ENCODE measurements at regions of chr3 and their contacts with region 1.

Region 1: DNA sequence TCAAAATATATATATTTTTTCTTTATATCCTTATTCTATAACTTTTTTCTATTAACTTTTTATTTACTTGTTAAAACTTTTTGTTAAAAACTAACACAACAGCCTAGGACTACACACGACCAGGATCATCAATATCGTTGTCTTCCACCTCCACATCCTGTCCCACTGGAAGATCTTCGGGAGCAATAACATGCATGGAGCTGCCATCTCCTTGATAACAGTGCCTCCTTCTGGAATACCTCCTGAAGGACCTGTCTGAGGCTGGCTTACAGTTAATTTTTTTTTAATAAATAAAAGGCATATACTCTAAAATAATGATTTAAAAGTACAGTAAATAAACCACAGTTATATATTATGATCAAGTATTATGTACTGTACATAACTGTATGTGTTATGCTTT is 58.9 kb downstream of the SFMBT1 start:
- DNase-seq: no peak
- H3K4me3 ChIP-seq: no peak overlapping the region
- H3K4me3 Mint-ChIP-seq: no peak overlapping the region
- H3K27ac ChIP-seq: no peak overlapping the region
- H3K27ac Mint-ChIP-seq: no peak overlapping the region
- H3K4me1 ChIP-seq: peaks cover 23 to 26% of the 10 kb centered on the region in 2 donors
- H3K4me1 Mint-ChIP-seq: peaks cover 20% of the 10 kb centered on the region
- H3K27me3 ChIP-seq: no peaks in the 10 kb centered on the region
- H3K27me3 Mint-ChIP-seq: peaks cover 0 to 5% (median 2%) of the 10 kb centered on the region in 3 donors
- CTCF ChIP-seq: no peak

Region 2: GRCh38 chr3:53005854-53006513 is 19.0 kb after region 1 on chr3:
- intact Hi-C with region 1: loop called in 1 of 2 experiments (anchors 1 kb)
- DNase-seq: no peak
- H3K4me3 ChIP-seq: no peak overlapping the region
- H3K4me3 Mint-ChIP-seq: no peak overlapping the region
- H3K27ac ChIP-seq: no peak overlapping the region
- H3K27ac Mint-ChIP-seq: no peak overlapping the region
- H3K4me1 ChIP-seq: no peaks in the 10 kb centered on the region
- H3K4me1 Mint-ChIP-seq: peaks cover 9% of the 10 kb centered on the region
- H3K27me3 ChIP-seq: no peaks in the 10 kb centered on the region
- H3K27me3 Mint-ChIP-seq: peaks cover 2 to 9% (median 8%) of the 10 kb centered on the region in 3 donors
- CTCF ChIP-seq: no peak

Region 3: DNA sequence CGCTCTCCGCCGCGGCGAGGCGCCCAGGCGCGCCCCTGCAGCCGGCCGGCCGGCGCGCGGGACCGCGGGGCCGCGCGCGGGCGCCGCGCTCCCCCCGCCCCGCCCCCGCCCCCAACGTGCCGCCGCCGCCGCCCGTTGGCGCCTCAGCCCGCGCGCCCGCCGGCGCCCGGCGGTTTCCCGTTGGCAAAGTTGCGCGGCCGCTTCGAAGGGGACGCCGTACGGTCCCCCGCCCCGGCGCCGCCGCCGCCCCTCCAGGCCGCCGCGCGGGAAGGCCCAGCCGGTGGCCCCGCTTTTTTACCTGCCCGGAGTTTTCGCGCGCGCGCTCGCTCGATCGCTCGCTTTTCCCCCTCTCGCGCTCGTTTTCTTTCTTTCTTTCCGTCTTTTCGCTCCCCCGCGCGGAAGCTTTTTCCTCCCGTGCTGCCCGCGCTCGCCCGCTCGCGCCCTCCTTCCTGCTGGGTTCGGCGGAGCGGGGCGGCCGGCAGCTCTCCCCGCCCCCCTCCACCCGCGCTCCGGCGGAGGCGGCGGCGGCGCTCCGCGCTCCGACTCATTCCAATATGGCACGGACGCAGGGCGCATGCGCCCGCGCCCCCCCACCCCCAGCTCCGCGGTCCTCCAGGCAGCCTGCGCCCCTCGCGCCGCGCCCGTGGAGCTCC is 58.7 kb after region 1 on chr3 and contains the start of gene SFMBT1:
- intact Hi-C with region 1: no loop called
- DNase-seq: peak; percentile 58 to 64 (median 60)
- H3K4me3 ChIP-seq: peak within 1 kb of the TSS; percentile 77 to 93 (median 91)
- H3K4me3 Mint-ChIP-seq: peak within 1 kb of the TSS; percentile 93 to 97
- H3K27ac ChIP-seq: peak within 1 kb of the TSS; percentile 46 to 76
- H3K27ac Mint-ChIP-seq: peak within 1 kb of the TSS in 6 of 7 donors; percentile 65 to 87 (median 82)
- H3K4me1 ChIP-seq: peaks cover 12 to 23% of the 10 kb centered on the region in 2 donors
- H3K4me1 Mint-ChIP-seq: peaks cover 15% of the 10 kb centered on the region
- H3K27me3 ChIP-seq: peaks cover 12 to 41% of the 10 kb centered on the region in 2 donors
- H3K27me3 Mint-ChIP-seq: peaks cover 30 to 53% (median 51%) of the 10 kb centered on the region in 3 donors
- CTCF ChIP-seq: no peak
- polyA plus RNA-seq, gene SFMBT1: 0.61 to 2.7 (median 0.91) TPM